A549 (cell line): ENCODE measurements at regions of chr22 and their contacts with region 1.

Region 1: DNA sequence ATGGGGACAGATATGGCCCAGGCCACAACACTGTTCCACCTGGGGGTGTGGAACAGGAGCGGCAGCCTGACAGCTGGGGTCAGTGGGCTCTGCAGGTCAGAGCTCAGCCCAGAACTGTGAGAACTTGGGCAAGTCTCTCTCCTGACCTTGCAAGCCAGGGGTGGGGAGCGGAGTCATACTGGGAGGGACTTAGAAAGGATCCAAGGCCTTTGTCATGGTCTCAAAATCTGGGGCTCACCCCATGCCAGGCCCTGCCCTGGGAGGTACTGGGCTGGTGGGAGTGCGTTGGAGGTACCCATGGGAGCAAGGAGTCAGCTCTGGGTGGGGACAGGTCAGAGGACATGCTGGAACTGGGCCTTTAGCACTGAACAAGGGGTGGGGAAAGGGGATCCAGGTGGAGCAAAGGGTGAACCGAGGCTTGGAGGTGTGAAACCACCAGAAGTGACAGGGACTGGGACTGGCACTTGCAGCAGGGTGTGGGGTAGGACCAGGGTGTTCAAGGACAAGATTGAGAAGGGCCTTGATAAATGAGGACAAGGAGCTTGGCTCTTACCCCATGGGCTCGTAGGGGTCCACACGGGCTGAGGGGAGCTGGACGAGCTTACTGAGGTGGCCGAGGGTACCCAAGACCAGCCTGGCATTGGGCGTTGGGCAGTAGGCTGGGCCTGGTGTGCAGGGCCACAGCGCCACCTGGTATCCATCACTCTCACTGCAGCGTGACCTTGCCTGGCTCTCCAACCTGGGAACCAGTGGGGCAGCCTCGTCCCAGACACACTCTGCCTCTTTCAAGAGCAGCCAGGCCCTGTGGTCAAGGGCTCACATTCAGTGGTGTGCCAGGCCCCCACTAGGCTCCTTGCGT is 7.4 kb upstream of the PMM1 start:
- DNase-seq: peak; percentile 60 to 61
- ATAC-seq: peak; percentile 89 to 95
- H3K4me3 ChIP-seq: no peak overlapping the region
- H3K27ac ChIP-seq: peak overlapping the region in 1 of 2 experiments; percentile 58; a peak in 3 of 6 replicates
- H3K4me1 ChIP-seq: peaks cover 23% of the 10 kb centered on the region
- CTCF ChIP-seq: peak; percentile 68
- EP300 ChIP-seq: no peak
- POLR2A ChIP-seq: no peak
- RAD21 ChIP-seq: peak; percentile 76 to 86

Region 2: GRCh38 chr22:41532908-41533825 is 63.8 kb before region 1 on chr22:
- CTCF ChIA-PET with region 1: interaction called, 18 read pairs
- POLR2A ChIA-PET with region 1: interaction called, 6 read pairs
- DNase-seq: peak; percentile 47 to 54
- ATAC-seq: peak; percentile 64 to 80
- H3K4me3 ChIP-seq: no peak overlapping the region
- H3K27ac ChIP-seq: no peak overlapping the region
- H3K4me1 ChIP-seq: no peaks in the 10 kb centered on the region
- CTCF ChIP-seq: peak; percentile 55
- EP300 ChIP-seq: no peak
- POLR2A ChIP-seq: no peak
- RAD21 ChIP-seq: peak in 1 of 2 experiments; percentile 38; a peak in 1 of 5 replicates

Region 3: DNA sequence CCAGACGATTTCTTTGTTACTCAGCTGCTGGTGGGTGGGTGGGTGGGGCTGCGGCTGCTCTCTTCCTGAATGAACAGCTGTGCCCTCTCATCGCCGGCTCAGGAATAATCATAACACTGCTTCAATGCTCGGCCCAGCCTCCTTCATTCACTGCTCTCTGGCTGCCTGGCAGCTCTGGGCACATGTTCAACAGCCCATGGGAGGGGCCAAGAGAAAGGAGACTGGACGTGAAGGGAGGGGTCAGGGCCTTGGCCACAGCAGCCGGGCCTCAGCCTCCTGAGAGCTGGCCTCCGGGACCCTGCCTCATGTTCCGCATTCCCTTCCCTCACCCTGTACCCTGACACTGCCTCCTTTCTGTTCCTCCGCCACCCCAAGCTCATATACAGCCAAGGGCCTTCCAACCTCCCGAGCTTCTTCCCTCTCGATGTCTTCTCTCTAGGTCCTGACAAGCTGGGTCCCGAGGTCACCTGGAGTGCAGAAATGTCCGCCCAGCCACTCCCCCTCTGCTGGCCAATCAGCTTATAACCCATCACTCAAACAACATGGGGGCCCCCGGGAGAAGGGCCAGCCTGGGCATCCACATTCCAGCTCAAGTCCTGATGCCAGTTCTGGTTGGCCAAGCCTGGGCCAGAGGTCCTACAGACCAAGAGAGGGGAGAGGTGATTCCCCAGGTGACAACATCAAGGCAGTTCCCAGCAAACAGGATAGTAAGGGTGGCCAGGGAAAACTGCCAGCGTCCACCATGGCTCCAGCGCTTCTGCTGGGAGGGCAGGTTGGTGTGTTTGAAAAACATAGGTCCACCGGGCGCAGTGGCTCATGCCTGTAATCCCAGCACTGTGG is 39.4 kb before region 1 on chr22:
- CTCF ChIA-PET with region 1: interaction called, 23 read pairs
- POLR2A ChIA-PET with region 1: no interaction called
- DNase-seq: no peak
- ATAC-seq: no peak
- H3K4me3 ChIP-seq: no peak overlapping the region
- H3K27ac ChIP-seq: 0 out of 6 replicates have a peak overlapping the region, but pooled peaks of 1 of the 2 experiments have one; percentile 35
- H3K4me1 ChIP-seq: peaks cover 27% of the 10 kb centered on the region
- CTCF ChIP-seq: no peak
- EP300 ChIP-seq: no peak
- POLR2A ChIP-seq: no peak
- RAD21 ChIP-seq: no peak

Region 4: DNA sequence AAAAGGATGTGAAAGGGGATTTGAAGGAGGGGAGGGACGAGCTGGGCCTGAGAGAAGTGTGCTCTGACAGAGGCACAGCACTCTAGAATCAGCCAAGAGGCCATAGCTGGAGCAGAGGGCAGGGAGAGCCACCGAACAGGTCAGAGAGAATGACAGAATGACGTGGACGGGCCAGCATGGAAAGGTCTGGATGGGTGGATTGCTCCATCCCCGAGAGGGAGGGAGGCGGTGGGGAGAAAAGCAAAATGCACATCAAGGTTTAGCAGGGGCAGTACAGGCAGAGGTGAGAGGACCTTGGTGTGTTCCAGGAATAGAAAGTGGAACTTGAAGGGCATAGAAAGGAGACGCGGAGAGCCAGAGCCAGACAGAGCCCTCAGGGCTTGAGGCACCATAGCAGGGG is 14.3 kb before region 1 on chr22:
- CTCF ChIA-PET with region 1: interaction called, 17 read pairs
- POLR2A ChIA-PET with region 1: no interaction called
- DNase-seq: no peak
- ATAC-seq: no peak
- H3K4me3 ChIP-seq: no peak overlapping the region
- H3K27ac ChIP-seq: no peak overlapping the region
- H3K4me1 ChIP-seq: peaks cover 6% of the 10 kb centered on the region
- CTCF ChIP-seq: no peak
- EP300 ChIP-seq: no peak
- POLR2A ChIP-seq: no peak
- RAD21 ChIP-seq: no peak

Region 5: GRCh38 chr22:41647771-41648170 is 50.8 kb after region 1 on chr22:
- CTCF ChIA-PET with region 1: no interaction called
- POLR2A ChIA-PET with region 1: no interaction called
- DNase-seq: no peak
- ATAC-seq: no peak
- H3K4me3 ChIP-seq: no peak overlapping the region
- H3K27ac ChIP-seq: no peak overlapping the region
- H3K4me1 ChIP-seq: no peaks in the 10 kb centered on the region
- CTCF ChIP-seq: no peak
- EP300 ChIP-seq: no peak
- POLR2A ChIP-seq: no peak
- RAD21 ChIP-seq: no peak

Region 6: GRCh38 chr22:41666661-41667258 is 69.8 kb after region 1 on chr22:
- CTCF ChIA-PET with region 1: no interaction called
- POLR2A ChIA-PET with region 1: no interaction called
- DNase-seq: peak; percentile 85 to 92
- ATAC-seq: peak; percentile 87 to 90
- H3K4me3 ChIP-seq: peak overlapping the region; percentile 40
- H3K27ac ChIP-seq: peak overlapping the region; percentile 90 to 97
- H3K4me1 ChIP-seq: peaks cover 41% of the 10 kb centered on the region
- CTCF ChIP-seq: peak; percentile 94
- EP300 ChIP-seq: no peak
- POLR2A ChIP-seq: peak; percentile 41; the same call in 1 of the 2 replicates
- RAD21 ChIP-seq: peak; percentile 57 to 65